ENCODE measurements at regions of chr9 and their contacts with region 1.

Region 1: DNA sequence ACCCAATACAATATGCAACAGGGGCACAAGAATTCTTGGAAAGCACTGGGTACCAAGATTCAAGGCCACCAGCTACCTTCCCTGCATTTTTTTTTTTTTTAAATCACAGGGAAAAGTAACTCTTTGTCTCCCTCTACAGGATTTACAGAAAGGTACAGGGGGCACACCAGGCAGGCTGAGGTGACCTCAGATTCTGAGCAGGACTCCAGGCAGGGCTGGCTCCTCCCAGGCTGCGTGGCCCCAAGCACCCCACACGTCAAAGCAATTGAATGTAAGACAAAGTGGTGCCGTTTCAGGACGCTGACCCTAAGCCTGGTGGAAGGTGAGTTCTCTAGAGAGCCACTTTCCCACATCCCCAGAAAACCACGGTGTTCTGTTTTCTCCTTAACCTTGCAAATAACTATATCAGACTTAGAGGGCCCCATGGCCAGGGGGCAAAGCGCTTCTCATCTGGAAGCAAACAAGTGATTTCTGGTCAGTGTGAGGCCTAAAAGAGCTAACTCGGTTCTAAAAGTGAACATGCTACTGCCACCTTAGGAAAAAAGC is 222.6 kb downstream of the ROR2 start:
- H3K4me3 ChIP-seq: no peak overlapping the region
- H3K27ac ChIP-seq: no peak overlapping the region
- H3K4me1 ChIP-seq: no peaks in the 10 kb centered on the region
- CTCF ChIP-seq: 0 out of 2 replicates have a peak, but pooled peaks have one; percentile 19

Region 2: GRCh38 chr9:91659529-91660495 is 67.6 kb before region 1 on chr9:
- CTCF ChIA-PET with region 1: interaction called, 18 read pairs
- POLR2A ChIA-PET with region 1: no interaction called
- H3K4me3 ChIP-seq: no peak overlapping the region
- H3K27ac ChIP-seq: no peak overlapping the region
- H3K4me1 ChIP-seq: no peaks in the 10 kb centered on the region
- CTCF ChIP-seq: no peak; the same call in 1 of the 2 replicates

Region 3: GRCh38 chr9:91694081-91694870 is 33.1 kb before region 1 on chr9:
- CTCF ChIA-PET with region 1: no interaction called
- POLR2A ChIA-PET with region 1: no interaction called
- H3K4me3 ChIP-seq: no peak overlapping the region
- H3K27ac ChIP-seq: no peak overlapping the region
- H3K4me1 ChIP-seq: no peaks in the 10 kb centered on the region
- CTCF ChIP-seq: no peak

Measured in HEK293 (cell line).